ENCODE measurements at regions of chr5 and their contacts with region 1.

Region 1: DNA sequence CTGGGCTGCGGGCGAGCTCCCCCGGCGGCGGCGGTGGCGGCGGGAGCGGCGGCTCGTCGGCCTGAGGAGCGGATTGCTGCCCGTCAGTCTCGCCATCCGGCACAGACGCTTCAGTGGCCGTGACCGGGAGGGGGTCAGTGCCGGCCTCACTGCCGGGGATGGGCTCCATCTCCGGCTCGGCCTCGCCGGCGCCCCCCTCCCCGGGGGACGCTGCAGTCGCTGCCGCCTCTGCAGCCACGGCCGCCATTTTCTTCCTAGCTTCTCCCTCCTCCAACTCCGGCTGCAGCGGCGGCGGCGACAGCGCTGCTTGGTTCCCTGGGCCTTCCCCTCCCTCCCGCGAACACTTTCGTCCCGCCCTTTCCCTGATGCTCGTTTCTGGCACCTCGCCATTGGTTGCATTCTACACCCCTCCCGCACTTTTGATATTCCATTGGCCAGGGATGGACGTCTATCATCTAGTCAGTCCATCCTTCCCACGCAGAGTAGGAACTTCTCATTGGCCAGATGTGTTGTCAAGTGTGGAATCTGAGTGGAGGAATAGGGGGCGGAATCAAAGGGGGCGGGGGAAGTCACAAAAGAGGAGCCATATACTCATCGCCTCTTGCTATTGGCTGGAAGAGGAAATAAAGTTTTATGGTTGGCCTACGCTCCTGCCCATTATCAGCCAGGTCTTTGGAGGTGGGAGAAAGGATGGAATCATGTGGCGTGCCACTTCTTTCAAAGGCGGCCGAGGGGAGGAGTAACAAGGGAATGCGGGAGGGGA is at the start of gene PWWP2A:
- DNase-seq: peak; percentile 98 to 99
- ATAC-seq: peak; percentile 92 to 97 (median 96)
- H3K4me3 ChIP-seq: peak within 1 kb of the TSS; percentile 82
- H3K27ac ChIP-seq: peak within 1 kb of the TSS; percentile 91
- H3K4me1 ChIP-seq: peaks cover 11% of the 10 kb centered on the region
- H3K27me3 ChIP-seq: no peaks in the 10 kb centered on the region
- CTCF ChIP-seq: peak; percentile 11
- total RNA-seq, gene PWWP2A: 7.3 to 13.4 (median 8.9) TPM

Region 2: GRCh38 chr5:160030631-160031377 is 88.5 kb before region 1 on chr5:
- intact Hi-C with region 1: loop called (anchors 10 kb)
- DNase-seq: no peak
- ATAC-seq: peak in 1 of 4 donors; percentile 22
- H3K4me3 ChIP-seq: no peak overlapping the region
- H3K27ac ChIP-seq: no peak overlapping the region
- H3K4me1 ChIP-seq: no peaks in the 10 kb centered on the region
- H3K27me3 ChIP-seq: no peaks in the 10 kb centered on the region
- CTCF ChIP-seq: no peak

Measured in psoas muscle (tissue), 8 donors.